Activated CD8-positive, alpha-beta T cell treated with anti-CD3 and anti-CD28 coated beads, Interleukin-2, amount 10 ng/mL, durations not matched to agents 7 days and 5 days (primary cell): ENCODE measurements at regions of chr11 and their contacts with region 1.

Region 1: DNA sequence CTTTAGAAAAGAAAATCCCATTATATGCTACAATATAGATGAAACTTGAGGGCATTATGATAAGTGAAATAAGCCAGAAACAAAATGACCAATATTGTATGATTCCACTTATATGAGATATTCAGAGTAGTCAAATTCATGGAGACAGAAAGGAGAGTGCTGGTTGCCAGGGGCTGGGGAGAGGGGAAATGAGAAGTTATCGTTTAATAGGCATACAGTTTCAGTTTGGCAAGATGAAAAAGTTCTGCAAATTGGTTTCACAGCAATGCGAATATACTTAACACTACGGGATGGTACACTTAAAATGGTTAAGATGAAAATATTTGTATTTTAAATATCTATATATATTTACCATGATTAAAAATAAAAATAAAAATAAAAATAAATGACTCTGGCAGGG is 31.1 kb upstream of the RDX start:
- DNase-seq: no peak
- ATAC-seq: no peak
- H3K4me3 Mint-ChIP-seq: peak overlapping the region; percentile 76
- H3K27ac Mint-ChIP-seq: peak overlapping the region; percentile 2
- H3K4me1 Mint-ChIP-seq: peaks cover 16% of the 10 kb centered on the region
- H3K27me3 Mint-ChIP-seq: no peaks in the 10 kb centered on the region

Region 2: DNA sequence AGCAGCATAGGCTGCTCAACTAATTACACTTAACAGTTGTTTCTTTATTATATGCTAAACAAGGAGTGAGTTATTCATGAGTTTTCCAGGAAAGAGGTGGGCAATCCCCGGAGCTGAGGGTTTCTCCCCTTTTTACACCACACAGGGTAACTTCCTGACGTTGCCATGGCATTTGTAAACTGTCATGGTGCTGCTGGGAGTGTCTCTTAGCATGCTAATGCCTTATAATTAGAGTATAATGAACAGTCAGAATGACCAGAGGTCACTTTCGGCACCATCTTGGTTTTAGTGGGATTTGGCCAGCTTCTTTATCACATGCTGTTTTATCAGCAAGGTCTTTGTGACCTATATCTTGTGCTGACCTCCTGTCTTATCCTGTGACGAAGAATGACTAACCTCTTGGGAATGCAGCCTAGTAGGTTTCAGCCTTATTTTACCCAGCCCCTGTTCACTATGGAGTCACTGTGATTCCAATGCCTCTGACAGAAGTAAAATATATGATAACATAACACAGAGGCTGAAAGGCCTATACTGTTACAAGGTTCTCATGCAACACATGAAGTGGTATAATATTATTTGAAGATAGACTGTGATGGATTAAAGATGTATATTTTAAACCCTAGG is 10.2 kb after region 1 on chr11:
- CTCF ChIA-PET with region 1: interaction called, 12 read pairs
- POLR2A ChIA-PET with region 1: interaction called, 4 read pairs
- DNase-seq: peak; percentile 32
- ATAC-seq: peak; percentile 51
- H3K4me3 Mint-ChIP-seq: no peak overlapping the region
- H3K27ac Mint-ChIP-seq: no peak overlapping the region
- H3K4me1 Mint-ChIP-seq: peaks cover 18% of the 10 kb centered on the region
- H3K27me3 Mint-ChIP-seq: no peaks in the 10 kb centered on the region